HCT116 (cell line): ENCODE measurements at regions of chr22 and their contacts with region 1.

Region 1: DNA sequence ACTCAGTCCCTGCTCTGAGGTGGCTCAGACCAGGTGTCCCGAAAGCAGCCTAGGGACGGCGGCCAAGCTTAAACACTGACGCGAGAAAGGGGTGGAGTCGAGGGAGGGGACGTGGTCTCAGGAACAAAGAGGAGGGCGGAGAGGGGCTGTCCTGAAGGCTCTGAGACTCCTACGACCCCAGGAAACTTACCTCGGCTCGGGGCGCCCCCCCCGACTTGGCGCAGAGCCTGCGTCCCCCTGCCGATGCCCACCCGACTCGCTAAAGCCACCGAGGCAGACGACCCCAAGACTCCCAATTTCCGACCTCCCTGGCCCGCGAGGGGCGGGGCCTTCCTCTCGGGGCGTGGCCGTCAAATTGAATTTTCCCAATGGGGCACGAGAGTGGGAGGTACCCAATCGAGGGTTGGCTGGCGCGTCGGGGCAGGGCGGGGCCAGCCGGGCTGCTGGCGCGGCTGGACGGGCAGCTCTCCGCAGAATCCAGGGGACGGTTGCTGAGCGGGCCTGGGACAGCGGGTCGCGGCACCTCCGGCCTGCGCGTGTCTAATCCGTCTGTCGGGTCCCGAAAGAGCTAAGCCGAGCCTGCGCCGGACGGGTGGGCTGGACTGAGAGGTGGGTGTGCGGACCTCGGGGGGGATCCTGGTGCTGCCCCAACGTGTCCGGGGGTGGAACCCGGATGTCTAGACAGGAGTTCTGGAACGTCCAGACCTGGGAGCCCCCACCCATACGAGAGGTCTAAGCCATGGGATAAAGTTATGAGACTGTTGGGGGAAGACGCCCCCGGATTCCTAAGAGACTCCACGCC is at the start of gene SMTN:
- DNase-seq: peak; percentile 83
- ATAC-seq: peak; percentile 71
- H3K4me3 ChIP-seq: peak within 1 kb of the TSS; percentile 78 to 93
- H3K27ac ChIP-seq: peak within 1 kb of the TSS; percentile 94
- H3K4me1 ChIP-seq: peaks cover 30 to 64% of the 10 kb centered on the region in 2 experiments
- H3K27me3 ChIP-seq: no peaks in the 10 kb centered on the region
- CTCF ChIP-seq: no peak
- POLR2A ChIP-seq: peak; percentile 81
- RAD21 ChIP-seq: no peak
- total RNA-seq, gene SMTN: 148 TPM

Region 2: GRCh38 chr22:30763815-30764686 is 317.0 kb before region 1 on chr22:
- CTCF ChIA-PET with region 1: interaction called, 25 read pairs
- POLR2A ChIA-PET with region 1: interaction called, 3 read pairs
- RAD21 ChIA-PET with region 1: interaction called in 1 of 2 experiments, 3 read pairs
- intact Hi-C with region 1: loop called (anchors 2 kb)
- DNase-seq: peak; percentile 59
- ATAC-seq: peak; percentile 90
- H3K4me3 ChIP-seq: no peak overlapping the region
- H3K27ac ChIP-seq: no peak overlapping the region
- H3K4me1 ChIP-seq: peaks cover 2 to 3% of the 10 kb centered on the region in 2 experiments; a peak in 2 of 4 replicates
- H3K27me3 ChIP-seq: no peaks in the 10 kb centered on the region
- CTCF ChIP-seq: peak; percentile 68 to 90 (median 80)
- POLR2A ChIP-seq: no peak
- RAD21 ChIP-seq: peak; percentile 94

Region 3: DNA sequence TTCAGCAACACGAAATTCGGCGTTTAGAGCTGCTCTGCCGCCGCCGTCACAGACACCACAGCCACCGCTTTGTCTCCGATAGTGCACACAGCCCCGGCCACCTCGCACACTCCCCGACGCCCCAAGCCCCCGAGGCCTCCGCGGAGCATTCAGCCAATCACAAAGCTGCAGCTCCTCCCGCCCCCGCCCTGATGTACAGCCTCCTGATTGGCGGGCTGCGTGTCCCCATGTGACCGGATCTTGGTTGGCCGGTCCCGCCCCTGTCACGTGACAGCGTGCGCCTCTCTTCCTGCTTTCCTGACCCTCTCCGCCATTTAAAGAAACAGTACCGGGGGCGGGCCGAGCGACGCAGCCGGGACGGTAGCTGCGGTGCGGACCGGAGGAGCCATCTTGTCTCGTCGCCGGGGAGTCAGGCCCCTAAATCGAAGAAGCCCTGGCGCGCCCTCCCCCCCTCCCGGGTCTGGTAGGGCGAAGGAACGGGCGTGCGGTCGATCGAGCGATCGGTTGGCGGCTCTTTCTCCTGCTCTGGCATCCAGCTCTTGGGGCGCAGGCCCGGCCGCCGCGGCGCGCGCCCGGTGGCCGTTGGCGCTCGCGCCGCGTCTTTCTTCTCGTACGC is 112.0 kb before region 1 on chr22 and contains the start of gene TUG1:
- CTCF ChIA-PET with region 1: interaction called, 15 read pairs
- POLR2A ChIA-PET with region 1: interaction called, 9 read pairs
- RAD21 ChIA-PET with region 1: interaction called in 1 of 2 experiments, 3 read pairs
- intact Hi-C with region 1: loop called (anchors 5 kb)
- DNase-seq: peak; percentile 96
- ATAC-seq: peak; percentile 89
- H3K4me3 ChIP-seq: peak within 1 kb of the TSS; percentile 72 to 83
- H3K27ac ChIP-seq: peak within 1 kb of the TSS; percentile 92
- H3K4me1 ChIP-seq: peaks cover 9 to 22% of the 10 kb centered on the region in 2 experiments
- H3K27me3 ChIP-seq: no peaks in the 10 kb centered on the region
- CTCF ChIP-seq: no peak
- POLR2A ChIP-seq: no peak
- RAD21 ChIP-seq: no peak
- total RNA-seq, gene TUG1: 45.0 TPM

Region 4: GRCh38 chr22:31107178-31107893 is 26.3 kb after region 1 on chr22 and contains the start of gene SELENOM:
- CTCF ChIA-PET with region 1: interaction called, 19 read pairs
- POLR2A ChIA-PET with region 1: interaction called, 8 read pairs
- RAD21 ChIA-PET with region 1: interaction called in 1 of 2 experiments, 3 read pairs
- intact Hi-C with region 1: no loop called
- DNase-seq: peak; percentile 96
- ATAC-seq: peak; percentile 98
- H3K4me3 ChIP-seq: peak within 1 kb of the TSS; percentile 90 to 97
- H3K27ac ChIP-seq: peak within 1 kb of the TSS; percentile 75
- H3K4me1 ChIP-seq: peaks cover 14 to 25% of the 10 kb centered on the region in 2 experiments; a peak in 3 of 4 replicates
- H3K27me3 ChIP-seq: no peaks in the 10 kb centered on the region
- CTCF ChIP-seq: peak; percentile 94 to 98 (median 97); a peak in 5 of 6 replicates
- POLR2A ChIP-seq: no peak
- RAD21 ChIP-seq: peak; percentile 97
- total RNA-seq, gene SELENOM: 65.6 TPM

Region 5: DNA sequence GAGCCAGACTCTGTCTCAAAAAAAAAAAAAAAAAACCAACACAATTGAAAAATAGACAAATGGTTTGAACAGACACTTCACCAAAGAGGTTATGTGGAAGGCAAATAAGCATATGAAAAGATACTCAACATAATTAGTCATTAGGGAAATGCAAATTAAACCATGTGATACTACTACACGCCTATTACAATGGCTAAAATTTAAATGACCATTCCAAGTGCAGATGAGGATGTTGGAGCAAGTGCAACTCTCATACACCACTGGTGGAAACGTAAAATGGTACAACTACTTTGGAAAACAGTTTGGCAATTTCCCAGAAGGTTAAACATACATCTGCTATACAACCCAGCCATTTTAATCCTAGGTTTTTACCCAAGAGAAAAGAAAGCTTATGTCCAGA is 384.3 kb after region 1 on chr22:
- CTCF ChIA-PET with region 1: no interaction called
- POLR2A ChIA-PET with region 1: no interaction called
- RAD21 ChIA-PET with region 1: no interaction called
- intact Hi-C with region 1: no loop called
- DNase-seq: no peak
- ATAC-seq: no peak
- H3K4me3 ChIP-seq: no peak overlapping the region
- H3K27ac ChIP-seq: no peak overlapping the region
- H3K4me1 ChIP-seq: no peaks in the 10 kb centered on the region; a peak in 1 of 4 replicates
- H3K27me3 ChIP-seq: no peaks in the 10 kb centered on the region
- CTCF ChIP-seq: no peak
- POLR2A ChIP-seq: no peak
- RAD21 ChIP-seq: no peak